Transverse colon (tissue), 4 donors: ENCODE measurements at regions of chr2 and their contacts with region 1.

Region 1: GRCh38 chr2:105449076-105449475 is 50.2 kb upstream of the FHL2 start:
- DNase-seq: peak; percentile 85
- H3K4me3 ChIP-seq: no peak overlapping the region
- H3K27ac ChIP-seq: peak overlapping the region; percentile 63 to 79 (median 74)
- H3K4me1 ChIP-seq: peaks cover 4 to 30% (median 8%) of the 10 kb centered on the region in 4 donors
- H3K27me3 ChIP-seq: no peaks in the 10 kb centered on the region
- CTCF ChIP-seq: no peak
- EP300 ChIP-seq: no peak
- POLR2A ChIP-seq: peak; percentile 50

Region 2: GRCh38 chr2:105398699-105399432 is 50.2 kb before region 1 on chr2 and contains the start of gene FHL2:
- in situ Hi-C with region 1: no loop called
- intact Hi-C with region 1: loop called (anchors 10 kb)
- DNase-seq: peak; percentile 78
- H3K4me3 ChIP-seq: peak within 1 kb of the TSS; percentile 61 to 76 (median 70)
- H3K27ac ChIP-seq: peak within 1 kb of the TSS; percentile 85 to 95 (median 93)
- H3K4me1 ChIP-seq: peaks cover 0 to 54% (median 26%) of the 10 kb centered on the region in 4 donors
- H3K27me3 ChIP-seq: no peaks in the 10 kb centered on the region
- CTCF ChIP-seq: peak; percentile 38 to 78 (median 54)
- EP300 ChIP-seq: no peak
- POLR2A ChIP-seq: peak; percentile 96
- total RNA-seq, gene FHL2: 56.1 to 140 (median 89.2) TPM

Region 3: GRCh38 chr2:105617756-105618659 is 168.9 kb after region 1 on chr2:
- in situ Hi-C with region 1: no loop called
- intact Hi-C with region 1: no loop called
- DNase-seq: no peak
- H3K4me3 ChIP-seq: no peak overlapping the region
- H3K27ac ChIP-seq: no peak overlapping the region
- H3K4me1 ChIP-seq: no peaks in the 10 kb centered on the region
- H3K27me3 ChIP-seq: no peaks in the 10 kb centered on the region
- CTCF ChIP-seq: no peak
- EP300 ChIP-seq: no peak
- POLR2A ChIP-seq: no peak